ENCODE measurements at regions of chr6 and their contacts with region 1.

Region 1: GRCh38 chr6:142946181-142946923 is 1.4 kb upstream of the HIVEP2 start:
- DNase-seq: peak; percentile 81
- H3K4me3 Mint-ChIP-seq: peak overlapping the region; percentile 92
- H3K27ac Mint-ChIP-seq: peak overlapping the region; percentile 97
- H3K4me1 Mint-ChIP-seq: peaks cover 43% of the 10 kb centered on the region
- H3K27me3 Mint-ChIP-seq: peaks cover 6% of the 10 kb centered on the region

Region 2: GRCh38 chr6:142551274-142551811 is 395.0 kb before region 1 on chr6:
- intact Hi-C with region 1: no loop called
- DNase-seq: peak; percentile 6
- H3K4me3 Mint-ChIP-seq: no peak overlapping the region
- H3K27ac Mint-ChIP-seq: no peak overlapping the region
- H3K4me1 Mint-ChIP-seq: peaks cover 21% of the 10 kb centered on the region
- H3K27me3 Mint-ChIP-seq: no peaks in the 10 kb centered on the region

Region 3: GRCh38 chr6:142722012-142722411 is 224.3 kb before region 1 on chr6:
- intact Hi-C with region 1: no loop called
- DNase-seq: no peak
- H3K4me3 Mint-ChIP-seq: no peak overlapping the region
- H3K27ac Mint-ChIP-seq: no peak overlapping the region
- H3K4me1 Mint-ChIP-seq: no peaks in the 10 kb centered on the region
- H3K27me3 Mint-ChIP-seq: peaks cover 2% of the 10 kb centered on the region

Region 4: GRCh38 chr6:142773859-142774648 is 172.3 kb before region 1 on chr6:
- intact Hi-C with region 1: loop called (anchors 5 kb)
- DNase-seq: no peak
- H3K4me3 Mint-ChIP-seq: no peak overlapping the region
- H3K27ac Mint-ChIP-seq: peak overlapping the region; percentile 80
- H3K4me1 Mint-ChIP-seq: peaks cover 44% of the 10 kb centered on the region
- H3K27me3 Mint-ChIP-seq: no peaks in the 10 kb centered on the region

Region 5: GRCh38 chr6:142850679-142851423 is 95.5 kb before region 1 on chr6:
- intact Hi-C with region 1: loop called (anchors 1 kb)
- DNase-seq: peak; percentile 41
- H3K4me3 Mint-ChIP-seq: peak overlapping the region; percentile 40
- H3K27ac Mint-ChIP-seq: peak overlapping the region; percentile 89
- H3K4me1 Mint-ChIP-seq: peaks cover 91% of the 10 kb centered on the region
- H3K27me3 Mint-ChIP-seq: no peaks in the 10 kb centered on the region

Region 6: GRCh38 chr6:142932889-142933288 is 13.5 kb before region 1 on chr6:
- intact Hi-C with region 1: loop called (anchors 1 kb)
- DNase-seq: no peak
- H3K4me3 Mint-ChIP-seq: peak overlapping the region; percentile 67
- H3K27ac Mint-ChIP-seq: peak overlapping the region; percentile 68
- H3K4me1 Mint-ChIP-seq: peaks cover 83% of the 10 kb centered on the region
- H3K27me3 Mint-ChIP-seq: no peaks in the 10 kb centered on the region

Region 7: GRCh38 chr6:142987490-142987889 is 41.1 kb after region 1 on chr6:
- intact Hi-C with region 1: no loop called
- DNase-seq: no peak
- H3K4me3 Mint-ChIP-seq: no peak overlapping the region
- H3K27ac Mint-ChIP-seq: no peak overlapping the region
- H3K4me1 Mint-ChIP-seq: no peaks in the 10 kb centered on the region
- H3K27me3 Mint-ChIP-seq: no peaks in the 10 kb centered on the region

Region 8: GRCh38 chr6:143450453-143451371 is 504.4 kb after region 1 on chr6 and contains the starts of genes ADAT2 and PEX3:
- intact Hi-C with region 1: loop called (anchors 2 kb)
- DNase-seq: peak; percentile 92
- H3K4me3 Mint-ChIP-seq: peak within 1 kb of the TSS; percentile 98
- H3K27ac Mint-ChIP-seq: peak within 1 kb of the TSS; percentile 99
- H3K4me1 Mint-ChIP-seq: peaks cover 50% of the 10 kb centered on the region
- H3K27me3 Mint-ChIP-seq: no peaks in the 10 kb centered on the region
- total RNA-seq, gene ADAT2: 39.0 and 43.6 TPM in 2 replicates
- total RNA-seq, gene PEX3: 23.6 and 25.0 TPM in 2 replicates

Region 9: GRCh38 chr6:143529095-143529494 is 582.7 kb after region 1 on chr6:
- intact Hi-C with region 1: no loop called
- DNase-seq: no peak
- H3K4me3 Mint-ChIP-seq: no peak overlapping the region
- H3K27ac Mint-ChIP-seq: no peak overlapping the region
- H3K4me1 Mint-ChIP-seq: peaks cover 15% of the 10 kb centered on the region
- H3K27me3 Mint-ChIP-seq: no peaks in the 10 kb centered on the region

Region 10: GRCh38 chr6:144095331-144096002 is 1149.1 kb after region 1 on chr6 and contains the start of gene SF3B5:
- intact Hi-C with region 1: loop called (anchors 10 kb)
- DNase-seq: peak; percentile 96
- H3K4me3 Mint-ChIP-seq: peak within 1 kb of the TSS; percentile 96
- H3K27ac Mint-ChIP-seq: peak within 1 kb of the TSS; percentile 98
- H3K4me1 Mint-ChIP-seq: peaks cover 39% of the 10 kb centered on the region
- H3K27me3 Mint-ChIP-seq: no peaks in the 10 kb centered on the region
- total RNA-seq, gene SF3B5: 204 and 232 TPM in 2 replicates

Measured in activated T-helper 1 cell treated with anti-CD3 and anti-CD28 coated beads, Interleukin-12 subunit alpha, Interleukin-12 subunit beta, Interleukin-2, Interleukin-4 antibody, amounts not matched to agents 30 ng/mL and 10 ng/mL and 1 ng/mL, durations not matched to agents 14 hours and 24 hours and 36 hours (primary cell).